ENCODE measurements at regions of chr7 and their contacts with region 1.

Region 1: GRCh38 chr7:151481650-151482505 is 37.8 kb downstream of the RHEB start:
- DNase-seq: no peak
- H3K4me3 ChIP-seq: no peak overlapping the region
- H3K27ac ChIP-seq: peak overlapping the region in 1 of 2 experiments; percentile 1
- H3K4me1 ChIP-seq: peaks cover 2 to 13% (median 8%) of the 10 kb centered on the region in 4 experiments
- H3K27me3 ChIP-seq: no peaks in the 10 kb centered on the region

Region 2: GRCh38 chr7:151470711-151471110 is 11.2 kb before region 1 on chr7:
- CTCF ChIA-PET with region 1: interaction called, 10 read pairs
- POLR2A ChIA-PET with region 1: no interaction called
- DNase-seq: no peak
- H3K4me3 ChIP-seq: no peak overlapping the region
- H3K27ac ChIP-seq: no peak overlapping the region
- H3K4me1 ChIP-seq: no peaks in the 10 kb centered on the region
- H3K27me3 ChIP-seq: no peaks in the 10 kb centered on the region

Region 3: GRCh38 chr7:151897161-151897731 is 415.4 kb after region 1 on chr7:
- CTCF ChIA-PET with region 1: no interaction called
- POLR2A ChIA-PET with region 1: no interaction called
- DNase-seq: no peak
- H3K4me3 ChIP-seq: no peak overlapping the region
- H3K27ac ChIP-seq: no peak overlapping the region
- H3K4me1 ChIP-seq: no peaks in the 10 kb centered on the region
- H3K27me3 ChIP-seq: peaks cover 0 to 3% (median 0%) of the 10 kb centered on the region in 5 experiments